ENCODE measurements at regions of chr6 and their contacts with region 1.

Region 1: GRCh38 chr6:11711003-11711983 is 67.3 kb downstream of the ADTRP start:
- DNase-seq: no peak
- H3K4me3 ChIP-seq: no peak overlapping the region
- H3K27ac ChIP-seq: no peak overlapping the region
- H3K4me1 ChIP-seq: peaks cover 6% of the 10 kb centered on the region; the same call in 1 of the 2 replicates
- H3K27me3 ChIP-seq: no peaks in the 10 kb centered on the region
- CTCF ChIP-seq: no peak

Region 2: GRCh38 chr6:11595903-11596302 is 115.4 kb before region 1 on chr6:
- CTCF ChIA-PET with region 1: no interaction called
- POLR2A ChIA-PET with region 1: no interaction called
- intact Hi-C with region 1: no loop called
- DNase-seq: no peak
- H3K4me3 ChIP-seq: no peak overlapping the region
- H3K27ac ChIP-seq: no peak overlapping the region
- H3K4me1 ChIP-seq: peaks cover 19% of the 10 kb centered on the region
- H3K27me3 ChIP-seq: no peaks in the 10 kb centered on the region
- CTCF ChIP-seq: peak; percentile 61

Region 3: DNA sequence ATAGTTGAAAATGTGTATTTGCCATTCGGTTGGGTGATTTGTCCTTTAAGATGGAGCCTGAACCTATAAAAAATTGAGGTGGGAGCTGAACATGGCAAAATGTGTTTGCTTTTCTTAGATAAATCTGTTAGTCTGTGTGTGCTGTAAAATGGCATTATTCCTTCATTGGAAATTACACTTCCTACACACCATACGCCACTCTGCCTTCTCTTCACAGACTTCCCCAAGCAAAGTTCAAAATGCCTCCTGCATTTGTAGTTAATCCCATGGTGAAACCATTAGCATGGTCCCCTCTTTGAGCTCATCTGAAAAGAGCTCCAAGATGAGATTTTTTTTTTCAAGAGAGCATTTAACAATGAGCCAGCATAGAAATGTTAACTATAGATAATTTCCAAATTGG is 66.7 kb after region 1 on chr6:
- CTCF ChIA-PET with region 1: interaction called, 3 read pairs
- POLR2A ChIA-PET with region 1: interaction called, 14 read pairs
- intact Hi-C with region 1: no loop called
- DNase-seq: no peak
- H3K4me3 ChIP-seq: no peak overlapping the region
- H3K27ac ChIP-seq: no peak overlapping the region
- H3K4me1 ChIP-seq: peaks cover 23% of the 10 kb centered on the region
- H3K27me3 ChIP-seq: no peaks in the 10 kb centered on the region
- CTCF ChIP-seq: no peak

Region 4: DNA sequence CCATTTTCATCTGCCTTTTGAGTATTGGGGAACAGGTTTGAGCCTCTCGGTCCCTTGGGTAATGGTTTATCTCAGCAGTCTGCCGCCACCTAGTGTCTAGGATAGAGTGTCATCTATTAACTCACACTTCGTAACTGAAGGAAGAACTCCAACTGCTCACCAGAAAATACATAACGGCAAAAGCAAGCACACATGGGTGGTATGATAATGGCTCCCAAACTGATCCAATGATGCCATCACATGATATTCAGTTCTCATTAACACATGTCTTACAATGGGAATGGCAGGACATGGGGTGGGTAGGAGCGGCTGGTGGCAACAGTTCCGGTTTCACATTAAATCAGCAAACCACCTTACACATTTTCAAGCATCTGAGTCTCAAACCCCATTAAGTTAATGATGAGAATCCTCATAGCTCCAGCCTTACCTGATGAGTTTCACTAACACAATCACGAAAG is 894.6 kb after region 1 on chr6:
- CTCF ChIA-PET with region 1: no interaction called
- POLR2A ChIA-PET with region 1: no interaction called
- intact Hi-C with region 1: no loop called
- DNase-seq: peak; percentile 53 to 79
- H3K4me3 ChIP-seq: no peak overlapping the region
- H3K27ac ChIP-seq: no peak overlapping the region
- H3K4me1 ChIP-seq: peaks cover 16% of the 10 kb centered on the region
- H3K27me3 ChIP-seq: no peaks in the 10 kb centered on the region
- CTCF ChIP-seq: peak; percentile 98